Head of caudate nucleus (tissue), 42 donors: ENCODE measurements at regions of chr9 and their contacts with region 1.

Region 1: GRCh38 chr9:74773886-74774479 is 113.7 kb downstream of the TRPM6 start:
- DNase-seq: peak; percentile 46 to 95 (median 86)

Region 2: GRCh38 chr9:74810200-74810599 is 36.2 kb after region 1 on chr9:
- intact Hi-C with region 1: no loop called
- DNase-seq: no peak

Region 3: DNA sequence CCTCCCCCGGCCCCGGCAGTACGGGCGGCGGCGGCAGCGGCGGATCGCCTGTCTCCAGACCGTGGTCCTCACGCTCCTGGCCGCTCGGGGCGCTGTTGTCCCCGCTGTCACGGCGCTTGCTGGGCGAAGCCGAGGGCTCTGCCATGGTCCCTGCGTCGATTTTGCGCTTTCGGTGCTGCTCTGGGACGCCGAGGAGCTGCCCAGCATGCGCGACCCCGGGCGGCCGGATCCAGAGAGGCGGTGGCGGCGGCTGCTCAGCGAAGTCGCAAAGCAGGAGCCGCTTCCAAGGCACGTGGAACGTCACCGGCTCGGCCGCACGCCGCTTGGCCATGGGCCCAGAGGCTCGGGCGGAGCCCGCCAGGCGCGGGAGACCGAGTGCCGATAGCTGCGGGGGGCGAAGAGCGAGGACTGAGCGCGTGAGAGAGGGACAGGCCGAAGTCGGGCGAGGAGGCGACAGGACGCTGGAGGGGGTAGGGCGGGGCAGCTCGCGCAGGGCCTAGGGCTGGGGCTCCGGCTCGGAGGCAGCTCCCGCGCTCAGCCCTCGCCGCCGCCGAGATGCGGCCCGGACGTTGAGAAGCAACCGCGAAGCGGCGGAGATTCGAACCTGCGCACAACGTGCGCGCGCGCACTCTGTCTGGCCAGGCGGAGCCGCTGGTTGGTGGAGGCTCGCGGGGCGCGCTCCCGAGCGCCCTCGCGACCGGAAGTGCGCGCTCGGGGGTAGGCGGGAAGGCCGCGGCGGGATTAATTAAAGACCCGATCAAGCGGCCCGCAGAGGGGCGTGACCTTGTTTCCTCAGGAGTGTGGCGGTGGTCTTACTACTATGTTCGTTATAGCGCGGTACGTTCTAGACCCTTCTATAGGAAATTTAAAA is 178.5 kb after region 1 on chr9 and contains the start of gene C9orf40:
- intact Hi-C with region 1: loop called (anchors 5 kb)
- DNase-seq: peak; percentile 72 to 95 (median 91)

Region 4: GRCh38 chr9:75001719-75002422 is 227.9 kb after region 1 on chr9:
- intact Hi-C with region 1: loop called (anchors 5 kb)
- DNase-seq: peak in 8 of 42 donors; percentile 5 to 67 (median 19)

Region 5: GRCh38 chr9:75071530-75072124 is 297.6 kb after region 1 on chr9:
- intact Hi-C with region 1: loop called (anchors 5 kb)
- DNase-seq: peak; percentile 44 to 93 (median 74)